ENCODE measurements at regions of chr11 and their contacts with region 1.

Region 1: GRCh38 chr11:117232092-117232878 is at the start of gene RNF214:
- DNase-seq: peak; percentile 54 to 87 (median 76)
- ATAC-seq: peak; percentile 81 to 82
- H3K4me3 Mint-ChIP-seq: peak within 1 kb of the TSS; percentile 95 to 100 (median 98)
- H3K27ac Mint-ChIP-seq: peak within 1 kb of the TSS; percentile 93 to 100 (median 99)
- H3K4me1 Mint-ChIP-seq: peaks cover 30 to 63% (median 49%) of the 10 kb centered on the region in 4 donors
- H3K27me3 Mint-ChIP-seq: no peaks in the 10 kb centered on the region
- polyA plus RNA-seq, gene RNF214: 7.5 to 11.6 (median 9.3) TPM

Region 2: GRCh38 chr11:117143871-117144476 is 88.3 kb before region 1 on chr11 and contains the start of gene PAFAH1B2:
- POLR2A ChIA-PET with region 1: interaction called, 30 read pairs
- DNase-seq: peak; percentile 91 to 97 (median 94)
- ATAC-seq: peak; percentile 86 to 88
- H3K4me3 Mint-ChIP-seq: peak within 1 kb of the TSS; percentile 94 to 99 (median 98)
- H3K27ac Mint-ChIP-seq: peak within 1 kb of the TSS; percentile 90 to 99 (median 97)
- H3K4me1 Mint-ChIP-seq: peaks cover 25 to 51% (median 47%) of the 10 kb centered on the region in 4 donors
- H3K27me3 Mint-ChIP-seq: peaks cover 2 to 10% (median 5%) of the 10 kb centered on the region in 5 donors
- polyA plus RNA-seq, gene PAFAH1B2: 14.4 to 19.5 (median 18.3) TPM

Region 3: GRCh38 chr11:117160826-117161225 is 71.5 kb before region 1 on chr11:
- POLR2A ChIA-PET with region 1: no interaction called
- DNase-seq: no peak
- ATAC-seq: no peak
- H3K4me3 Mint-ChIP-seq: no peak overlapping the region
- H3K27ac Mint-ChIP-seq: peak overlapping the region in 7 of 10 donors; percentile 5 to 77 (median 53)
- H3K4me1 Mint-ChIP-seq: peaks cover 7 to 32% (median 13%) of the 10 kb centered on the region in 4 donors
- H3K27me3 Mint-ChIP-seq: no peaks in the 10 kb centered on the region

Region 4: GRCh38 chr11:117178210-117179034 is 53.9 kb before region 1 on chr11 and contains the start of gene SIDT2:
- POLR2A ChIA-PET with region 1: interaction called, 70 read pairs
- DNase-seq: peak; percentile 78 to 93 (median 85)
- ATAC-seq: peak; percentile 94 to 95
- H3K4me3 Mint-ChIP-seq: peak within 1 kb of the TSS; percentile 89 to 97 (median 93)
- H3K27ac Mint-ChIP-seq: peak within 1 kb of the TSS; percentile 88 to 99 (median 98)
- H3K4me1 Mint-ChIP-seq: peaks cover 11 to 42% (median 32%) of the 10 kb centered on the region in 4 donors
- H3K27me3 Mint-ChIP-seq: no peaks in the 10 kb centered on the region
- polyA plus RNA-seq, gene SIDT2: 2.3 to 3.1 (median 2.3) TPM

Region 5: GRCh38 chr11:117221775-117222517 is 10.3 kb before region 1 on chr11:
- POLR2A ChIA-PET with region 1: interaction called, 20 read pairs
- DNase-seq: peak in 1 of 10 donors; percentile 46
- ATAC-seq: no peak
- H3K4me3 Mint-ChIP-seq: no peak overlapping the region
- H3K27ac Mint-ChIP-seq: peak overlapping the region in 3 of 10 donors; percentile 12 to 61 (median 14)
- H3K4me1 Mint-ChIP-seq: peaks cover 6 to 15% (median 14%) of the 10 kb centered on the region in 4 donors
- H3K27me3 Mint-ChIP-seq: no peaks in the 10 kb centered on the region